ENCODE measurements at regions of chr15 and their contacts with region 1.

Region 1: DNA sequence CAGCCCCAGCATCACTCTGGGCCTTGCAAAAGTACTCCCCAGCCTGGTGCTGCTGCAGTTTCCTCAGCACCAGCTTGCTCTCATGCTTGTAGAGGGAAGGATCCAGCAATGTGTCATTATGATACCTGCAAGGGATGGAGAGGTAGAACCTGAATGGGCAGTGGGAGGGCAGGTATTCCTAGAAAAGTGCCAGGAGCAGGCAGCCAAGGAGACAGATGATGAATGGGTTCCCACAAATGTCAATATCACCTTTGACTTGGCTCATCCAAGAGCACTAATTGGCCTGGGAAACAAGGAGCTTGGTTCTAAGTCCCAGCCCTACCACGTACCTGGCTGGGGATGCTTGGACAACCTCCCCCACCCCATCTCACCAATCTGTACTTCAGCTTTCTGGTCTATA is 9.4 kb downstream of the CILP start:
- DNase-seq: no peak
- H3K4me3 ChIP-seq: no peak overlapping the region
- H3K27me3 ChIP-seq: peaks cover 10% of the 10 kb centered on the region
- CTCF ChIP-seq: no peak

Region 2: GRCh38 chr15:64412216-64412615 is 789.7 kb before region 1 on chr15:
- CTCF ChIA-PET with region 1: no interaction called
- POLR2A ChIA-PET with region 1: interaction called, 10 read pairs
- DNase-seq: no peak
- H3K4me3 ChIP-seq: no peak overlapping the region
- H3K27me3 ChIP-seq: no peaks in the 10 kb centered on the region
- CTCF ChIP-seq: no peak

Measured in BJ (cell line).